Psoas muscle (tissue), 8 donors: ENCODE measurements at regions of chr6 and their contacts with region 1.

Region 1: GRCh38 chr6:42260972-42261371 is 43.3 kb upstream of the MRPS10 start:
- DNase-seq: peak in 1 of 2 donors; percentile 83
- ATAC-seq: peak; percentile 46 to 86 (median 68)
- H3K4me3 ChIP-seq: no peak overlapping the region
- H3K27ac ChIP-seq: no peak overlapping the region
- H3K4me1 ChIP-seq: no peaks in the 10 kb centered on the region
- H3K27me3 ChIP-seq: no peaks in the 10 kb centered on the region
- CTCF ChIP-seq: peak; percentile 41

Region 2: DNA sequence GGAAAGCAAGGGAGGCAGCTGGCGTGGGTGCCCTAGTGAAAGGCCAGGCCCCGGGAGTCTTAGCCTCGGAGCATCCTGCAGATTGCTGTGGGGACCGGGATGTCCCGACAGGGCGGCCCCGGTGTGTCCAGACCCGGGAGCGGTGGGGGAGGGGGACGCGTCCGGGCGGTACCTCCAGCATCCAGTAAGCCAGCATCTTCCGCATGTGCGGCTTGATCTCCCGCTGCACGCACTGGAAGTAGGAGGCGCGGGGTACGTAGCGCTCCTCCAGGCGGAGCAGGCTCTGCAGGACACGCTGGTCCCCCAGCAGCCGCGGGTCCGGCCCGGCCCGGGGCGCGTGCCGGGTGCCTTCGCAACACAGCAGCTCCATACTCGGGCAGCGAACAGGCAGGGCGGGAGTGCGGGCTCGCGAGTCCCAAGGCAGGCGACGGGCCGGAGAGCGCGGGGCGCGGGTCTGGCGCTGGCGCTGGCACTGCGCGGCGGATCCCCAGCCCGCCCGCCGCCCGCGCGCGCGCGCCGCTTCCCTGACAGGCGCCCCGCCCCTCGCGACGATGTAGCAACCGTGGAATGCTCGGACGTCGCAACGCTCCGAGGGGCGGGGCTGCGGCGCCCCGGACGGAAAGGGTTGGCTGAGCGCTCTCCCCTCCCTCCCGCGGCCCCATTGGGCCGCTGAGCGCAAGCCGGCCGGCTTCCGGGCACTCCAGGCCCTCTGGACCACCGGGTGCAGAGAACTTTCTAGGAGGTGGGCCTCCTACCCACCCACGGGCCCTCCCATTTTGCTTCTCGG is 319.5 kb before region 1 on chr6 and contains the start of gene CCND3:
- intact Hi-C with region 1: no loop called
- DNase-seq: peak; percentile 96
- ATAC-seq: peak; percentile 97 to 98 (median 98)
- H3K4me3 ChIP-seq: peak within 1 kb of the TSS; percentile 97
- H3K27ac ChIP-seq: peak within 1 kb of the TSS; percentile 66
- H3K4me1 ChIP-seq: peaks cover 22% of the 10 kb centered on the region
- H3K27me3 ChIP-seq: no peaks in the 10 kb centered on the region
- CTCF ChIP-seq: no peak
- total RNA-seq, gene CCND3: 9.2 to 19.9 (median 16.7) TPM

Region 3: GRCh38 chr6:42059743-42060142 is 201.2 kb before region 1 on chr6:
- intact Hi-C with region 1: no loop called
- DNase-seq: no peak
- ATAC-seq: no peak
- H3K4me3 ChIP-seq: no peak overlapping the region
- H3K27ac ChIP-seq: no peak overlapping the region
- H3K4me1 ChIP-seq: no peaks in the 10 kb centered on the region
- H3K27me3 ChIP-seq: no peaks in the 10 kb centered on the region
- CTCF ChIP-seq: no peak

Region 4: DNA sequence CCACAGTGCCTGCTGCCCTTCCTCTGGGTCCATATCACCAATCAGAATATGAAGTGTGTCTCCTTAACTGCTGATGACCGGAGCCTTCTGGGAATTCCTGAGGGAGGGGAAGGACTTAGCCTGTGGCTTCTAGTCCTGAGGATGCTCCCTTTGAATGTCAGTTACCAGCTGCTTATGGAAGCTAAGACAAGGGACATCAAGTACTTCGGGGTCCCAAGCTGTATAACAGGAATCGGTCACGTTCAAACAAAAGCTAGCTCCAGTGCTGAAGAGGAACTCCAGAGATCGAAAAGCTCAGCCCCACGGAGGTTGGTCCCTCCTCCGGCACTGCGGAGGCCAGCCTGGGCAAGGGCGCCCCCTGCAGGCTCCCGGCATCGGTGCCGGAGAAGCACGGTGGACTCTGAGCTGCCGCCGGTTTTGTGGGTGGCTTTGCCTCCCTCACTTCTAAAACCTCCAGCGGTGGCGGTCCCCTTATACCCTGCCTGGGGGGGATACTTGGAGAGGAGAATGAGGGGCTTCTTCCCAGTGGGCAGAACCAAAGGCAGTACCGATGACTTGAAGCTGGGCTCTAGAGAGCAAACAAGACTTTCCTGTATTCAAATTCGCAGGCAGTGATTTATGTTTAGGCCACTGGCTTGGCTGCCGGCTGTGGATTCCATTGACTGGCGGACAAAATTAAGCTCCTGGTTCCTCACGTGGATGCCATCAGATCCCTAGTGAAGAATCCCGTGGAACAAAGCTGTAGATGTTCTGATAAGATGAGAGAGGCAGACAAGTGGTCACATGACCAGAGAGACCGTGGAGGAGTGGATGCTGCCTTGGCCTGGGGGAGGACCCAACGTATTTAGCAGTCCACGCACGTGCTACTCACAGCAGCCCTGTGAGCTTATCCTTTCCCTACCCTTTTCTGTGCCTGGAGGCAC is 286.7 kb after region 1 on chr6:
- intact Hi-C with region 1: loop called (anchors 2 to 5 kb)
- DNase-seq: peak; percentile 84 to 89
- ATAC-seq: peak; percentile 96 to 99 (median 96)
- H3K4me3 ChIP-seq: peak overlapping the region; percentile 62
- H3K27ac ChIP-seq: no peak overlapping the region
- H3K4me1 ChIP-seq: no peaks in the 10 kb centered on the region
- H3K27me3 ChIP-seq: peaks cover 0 to 2% (median 0%) of the 10 kb centered on the region in 3 donors
- CTCF ChIP-seq: peak; percentile 95

Region 5: DNA sequence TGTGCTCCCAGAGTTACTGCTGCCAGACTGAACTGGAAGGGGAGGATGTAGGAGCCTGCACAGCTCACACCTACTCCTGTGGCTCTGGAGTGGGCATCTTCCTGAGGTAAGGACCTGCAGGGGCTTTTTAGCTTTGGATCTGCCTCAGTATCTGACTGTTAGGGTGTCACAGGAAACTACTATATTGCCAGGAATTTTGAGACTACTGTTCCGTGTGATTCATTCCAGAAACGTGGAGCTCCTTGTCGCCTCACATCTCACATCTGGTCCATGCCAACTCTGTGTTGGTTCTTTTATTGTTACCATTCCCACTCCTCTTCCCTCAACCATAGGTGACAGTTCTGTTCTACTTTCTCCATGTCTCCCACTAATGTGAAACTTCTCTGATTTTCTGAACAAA is 427.3 kb after region 1 on chr6:
- intact Hi-C with region 1: no loop called
- DNase-seq: no peak
- ATAC-seq: no peak
- H3K4me3 ChIP-seq: no peak overlapping the region
- H3K27ac ChIP-seq: peak overlapping the region; percentile 81
- H3K4me1 ChIP-seq: peaks cover 39% of the 10 kb centered on the region
- H3K27me3 ChIP-seq: no peaks in the 10 kb centered on the region
- CTCF ChIP-seq: no peak